Adrenal gland (tissue), 19 donors: ENCODE measurements at regions of chr13 and their contacts with region 1.

Region 1: GRCh38 chr13:49220036-49220855 is at the start of gene MLNR:
- DNase-seq: peak in 2 of 7 donors; percentile 24 to 25
- H3K4me3 ChIP-seq: peak within 1 kb of the TSS in 2 of 4 donors; percentile 14 to 57
- H3K27ac ChIP-seq: no peak within 1 kb of the TSS
- H3K4me1 ChIP-seq: peaks cover 6 to 11% of the 10 kb centered on the region in 2 donors
- H3K27me3 ChIP-seq: peaks cover 27% of the 10 kb centered on the region
- CTCF ChIP-seq: peak in 1 of 6 experiments; percentile 13
- POLR2A ChIP-seq: no peak
- total RNA-seq, gene MLNR: not detected

Region 2: DNA sequence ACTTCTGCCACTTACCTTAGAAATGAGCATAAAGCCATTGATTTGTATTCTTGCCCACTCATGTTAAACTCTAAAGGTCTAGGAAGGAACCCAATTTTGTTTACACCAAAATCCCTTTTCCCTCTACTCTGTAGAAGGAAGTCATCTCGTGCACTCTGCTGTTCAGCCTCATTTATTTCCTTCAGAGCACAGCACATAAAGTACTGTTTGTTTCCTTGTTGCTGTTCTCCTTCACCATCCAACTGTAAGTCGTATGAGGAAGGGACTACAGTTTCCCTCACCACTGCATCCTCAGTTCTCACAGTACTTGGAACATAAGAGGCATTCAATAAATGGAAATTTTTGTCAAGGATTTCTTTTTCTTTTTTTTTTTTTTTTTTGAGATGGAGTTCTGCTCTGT is 52.0 kb after region 1 on chr13:
- intact Hi-C with region 1: loop called in 1 of 2 experiments (anchors 10 kb)
- DNase-seq: no peak
- H3K4me3 ChIP-seq: no peak overlapping the region
- H3K27ac ChIP-seq: no peak overlapping the region
- H3K4me1 ChIP-seq: no peaks in the 10 kb centered on the region
- H3K27me3 ChIP-seq: no peaks in the 10 kb centered on the region
- CTCF ChIP-seq: no peak
- POLR2A ChIP-seq: no peak

Region 3: GRCh38 chr13:49836516-49836915 is 616.3 kb after region 1 on chr13:
- intact Hi-C with region 1: no loop called
- DNase-seq: no peak
- H3K4me3 ChIP-seq: no peak overlapping the region
- H3K27ac ChIP-seq: no peak overlapping the region
- H3K4me1 ChIP-seq: no peaks in the 10 kb centered on the region
- H3K27me3 ChIP-seq: no peaks in the 10 kb centered on the region
- CTCF ChIP-seq: no peak
- POLR2A ChIP-seq: no peak